IMR-90 (cell line): ENCODE measurements at regions of chr13 and their contacts with region 1.

Region 1: DNA sequence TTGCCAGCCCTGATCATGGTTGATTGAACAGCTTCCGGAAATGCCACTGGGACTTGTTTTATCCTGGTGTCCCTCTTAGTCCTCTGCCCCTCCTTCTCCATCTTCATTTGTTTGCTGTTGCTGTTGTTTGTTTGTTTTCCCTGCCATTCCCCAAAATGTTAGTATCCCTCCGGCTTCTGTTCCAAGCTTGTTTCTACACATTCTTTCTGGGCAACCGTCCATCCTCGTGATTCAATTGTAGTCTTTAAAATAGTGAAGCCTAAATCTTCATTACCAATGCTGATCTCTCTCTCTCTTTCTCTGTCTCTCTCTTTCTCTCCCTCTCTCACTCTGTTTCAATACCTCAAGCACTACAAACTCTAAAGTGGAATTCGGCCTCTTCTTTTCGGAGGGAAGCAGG is 649.3 kb upstream of the ARGLU1 start:
- DNase-seq: peak; percentile 30
- ATAC-seq: no peak
- H3K4me3 ChIP-seq: no peak overlapping the region
- H3K27ac ChIP-seq: no peak overlapping the region
- H3K4me1 ChIP-seq: peaks cover 7% of the 10 kb centered on the region; the same call in 1 of the 2 replicates
- H3K27me3 ChIP-seq: no peaks in the 10 kb centered on the region
- CTCF ChIP-seq: no peak
- POLR2A ChIP-seq: no peak
- RAD21 ChIP-seq: no peak

Region 2: GRCh38 chr13:106038752-106039151 is 1178.5 kb before region 1 on chr13:
- CTCF ChIA-PET with region 1: no interaction called
- POLR2A ChIA-PET with region 1: interaction called, 14 read pairs
- dilution Hi-C with region 1: no loop called
- in situ Hi-C with region 1: no loop called
- intact Hi-C with region 1: no loop called
- DNase-seq: peak; percentile 90
- ATAC-seq: peak; percentile 96
- H3K4me3 ChIP-seq: no peak overlapping the region
- H3K27ac ChIP-seq: no peak overlapping the region
- H3K4me1 ChIP-seq: peaks cover 2% of the 10 kb centered on the region; the same call in 1 of the 2 replicates
- H3K27me3 ChIP-seq: no peaks in the 10 kb centered on the region
- CTCF ChIP-seq: no peak
- POLR2A ChIP-seq: no peak
- RAD21 ChIP-seq: no peak

Region 3: GRCh38 chr13:106796280-106797047 is 420.8 kb before region 1 on chr13:
- CTCF ChIA-PET with region 1: no interaction called
- POLR2A ChIA-PET with region 1: no interaction called
- dilution Hi-C with region 1: no loop called
- in situ Hi-C with region 1: no loop called
- intact Hi-C with region 1: no loop called
- DNase-seq: no peak
- ATAC-seq: no peak
- H3K4me3 ChIP-seq: peak overlapping the region; percentile 26; the same call in 1 of the 2 replicates
- H3K27ac ChIP-seq: no peak overlapping the region
- H3K4me1 ChIP-seq: no peaks in the 10 kb centered on the region
- H3K27me3 ChIP-seq: no peaks in the 10 kb centered on the region
- CTCF ChIP-seq: no peak
- POLR2A ChIP-seq: no peak
- RAD21 ChIP-seq: no peak

Region 4: DNA sequence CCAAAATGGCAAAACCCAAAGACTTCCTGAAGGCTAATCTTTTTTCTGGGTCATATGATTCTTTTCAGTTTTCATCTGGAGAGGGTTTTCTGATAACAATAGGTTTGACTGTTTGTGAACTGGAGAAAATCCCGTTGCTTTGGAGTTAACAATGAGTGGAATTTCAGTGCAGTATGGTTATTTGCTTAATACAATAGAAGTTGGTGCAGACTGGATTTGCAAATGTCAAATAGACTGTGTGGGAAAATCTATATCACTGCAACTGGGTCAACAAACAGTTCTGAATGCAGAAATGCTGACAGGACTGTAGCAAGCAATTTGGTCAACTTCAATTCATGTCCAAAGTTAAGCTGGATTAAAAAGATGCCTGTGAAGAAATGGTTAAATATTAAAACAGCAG is 381.8 kb before region 1 on chr13:
- CTCF ChIA-PET with region 1: no interaction called
- POLR2A ChIA-PET with region 1: no interaction called
- dilution Hi-C with region 1: no loop called
- in situ Hi-C with region 1: no loop called
- intact Hi-C with region 1: no loop called
- DNase-seq: no peak
- ATAC-seq: no peak
- H3K4me3 ChIP-seq: no peak overlapping the region
- H3K27ac ChIP-seq: no peak overlapping the region
- H3K4me1 ChIP-seq: no peaks in the 10 kb centered on the region
- H3K27me3 ChIP-seq: no peaks in the 10 kb centered on the region; the same call in 1 of the 2 replicates
- CTCF ChIP-seq: no peak
- POLR2A ChIP-seq: no peak
- RAD21 ChIP-seq: no peak

Region 5: DNA sequence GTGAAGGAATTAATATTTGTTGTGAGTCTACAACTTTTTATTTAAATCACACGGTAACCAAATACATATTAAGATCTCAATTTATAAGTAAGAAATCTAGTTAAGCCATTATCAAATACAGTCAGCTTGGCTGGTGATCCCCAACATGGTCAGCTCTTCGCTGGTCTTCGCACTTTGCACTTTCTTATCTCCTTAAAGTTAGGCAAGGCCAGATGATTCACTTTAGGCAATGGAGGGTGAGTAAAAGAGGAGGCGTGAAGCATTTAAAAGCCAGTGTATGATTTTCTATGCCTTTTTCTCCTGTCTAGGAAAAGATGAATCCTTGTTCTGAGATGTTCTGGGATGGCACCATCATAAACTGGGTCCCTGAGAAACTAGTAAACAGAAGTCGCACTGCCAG is 144.4 kb after region 1 on chr13:
- CTCF ChIA-PET with region 1: no interaction called
- POLR2A ChIA-PET with region 1: no interaction called
- dilution Hi-C with region 1: no loop called
- in situ Hi-C with region 1: loop called (anchors 5 kb)
- intact Hi-C with region 1: no loop called
- DNase-seq: peak; percentile 82
- ATAC-seq: peak; percentile 23; the same call in 1 of the 2 replicates
- H3K4me3 ChIP-seq: no peak overlapping the region
- H3K27ac ChIP-seq: no peak overlapping the region
- H3K4me1 ChIP-seq: peaks cover 18% of the 10 kb centered on the region
- H3K27me3 ChIP-seq: no peaks in the 10 kb centered on the region
- CTCF ChIP-seq: no peak
- POLR2A ChIP-seq: no peak
- RAD21 ChIP-seq: no peak